Naive thymus-derived CD4-positive, alpha-beta T cell (primary cell): ENCODE measurements at regions of chr5 and their contacts with region 1.

Region 1: DNA sequence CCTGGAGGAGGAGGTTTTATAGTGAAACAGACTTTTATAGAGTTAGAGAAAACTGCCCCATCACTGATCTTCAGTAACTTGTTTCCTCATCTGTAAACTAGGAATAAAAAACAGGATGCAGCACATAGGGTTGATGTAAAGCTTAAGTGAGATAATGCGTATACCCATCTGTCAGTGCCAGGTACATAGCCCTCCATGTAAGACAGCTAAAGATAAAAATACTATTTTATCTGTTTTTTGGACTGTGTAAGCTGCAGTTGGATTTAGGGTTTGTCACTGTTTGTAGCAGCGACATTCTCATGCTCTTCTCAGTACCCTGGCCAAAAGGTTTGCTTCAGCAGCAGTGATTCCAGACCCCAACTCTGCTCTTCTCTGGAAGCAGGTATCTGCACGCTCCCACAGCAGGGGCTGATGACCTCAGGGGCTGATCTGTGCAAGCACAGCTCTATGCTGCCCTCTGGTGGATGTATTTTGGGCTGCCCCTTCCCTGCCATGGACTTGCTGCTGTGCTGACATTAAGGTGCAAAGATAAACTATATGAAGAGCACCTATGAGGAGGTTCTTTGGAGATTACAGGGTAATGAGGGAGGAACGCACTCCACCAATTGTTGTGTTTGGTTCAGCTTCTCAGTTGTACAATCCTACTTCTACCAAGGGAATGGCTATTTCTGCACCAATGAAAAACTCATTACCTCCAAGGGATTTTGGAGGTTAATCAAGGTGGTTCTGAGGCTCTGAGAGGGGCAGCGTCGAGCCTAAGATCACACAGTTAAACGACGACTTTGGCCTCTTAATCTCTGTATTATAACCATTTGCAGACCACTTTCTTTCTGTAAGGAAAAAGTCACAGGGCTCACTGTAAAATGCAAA is 13.1 kb downstream of the HMHB1 start:
- DNase-seq: peak; percentile 56 to 86 (median 75)
- ATAC-seq: peak; percentile 94
- H3K4me3 ChIP-seq: no peak overlapping the region
- H3K4me3 Mint-ChIP-seq: no peak overlapping the region
- H3K27ac ChIP-seq: no peak overlapping the region
- H3K27ac Mint-ChIP-seq: no peak overlapping the region
- H3K4me1 ChIP-seq: peaks cover 0 to 6% of the 10 kb centered on the region in 2 donors
- H3K4me1 Mint-ChIP-seq: peaks cover 0 to 18% (median 10%) of the 10 kb centered on the region in 7 donors
- H3K27me3 ChIP-seq: no peaks in the 10 kb centered on the region
- H3K27me3 Mint-ChIP-seq: peaks cover 0 to 5% (median 3%) of the 10 kb centered on the region in 5 donors

Region 2: GRCh38 chr5:142713121-142713706 is 1111.9 kb before region 1 on chr5:
- CTCF ChIA-PET with region 1: no interaction called
- POLR2A ChIA-PET with region 1: no interaction called
- intact Hi-C with region 1: loop called in 1 of 2 experiments (anchors 1 kb)
- DNase-seq: peak; percentile 72 to 92 (median 86)
- ATAC-seq: peak; percentile 96
- H3K4me3 ChIP-seq: peak overlapping the region; percentile 61
- H3K4me3 Mint-ChIP-seq: peak overlapping the region; percentile 45 to 82 (median 70)
- H3K27ac ChIP-seq: no peak overlapping the region
- H3K27ac Mint-ChIP-seq: peak overlapping the region in 2 of 9 donors; percentile 39 to 73
- H3K4me1 ChIP-seq: peaks cover 0 to 7% of the 10 kb centered on the region in 2 donors
- H3K4me1 Mint-ChIP-seq: peaks cover 0 to 16% (median 10%) of the 10 kb centered on the region in 7 donors
- H3K27me3 ChIP-seq: no peaks in the 10 kb centered on the region
- H3K27me3 Mint-ChIP-seq: peaks cover 0 to 33% (median 4%) of the 10 kb centered on the region in 5 donors

Region 3: DNA sequence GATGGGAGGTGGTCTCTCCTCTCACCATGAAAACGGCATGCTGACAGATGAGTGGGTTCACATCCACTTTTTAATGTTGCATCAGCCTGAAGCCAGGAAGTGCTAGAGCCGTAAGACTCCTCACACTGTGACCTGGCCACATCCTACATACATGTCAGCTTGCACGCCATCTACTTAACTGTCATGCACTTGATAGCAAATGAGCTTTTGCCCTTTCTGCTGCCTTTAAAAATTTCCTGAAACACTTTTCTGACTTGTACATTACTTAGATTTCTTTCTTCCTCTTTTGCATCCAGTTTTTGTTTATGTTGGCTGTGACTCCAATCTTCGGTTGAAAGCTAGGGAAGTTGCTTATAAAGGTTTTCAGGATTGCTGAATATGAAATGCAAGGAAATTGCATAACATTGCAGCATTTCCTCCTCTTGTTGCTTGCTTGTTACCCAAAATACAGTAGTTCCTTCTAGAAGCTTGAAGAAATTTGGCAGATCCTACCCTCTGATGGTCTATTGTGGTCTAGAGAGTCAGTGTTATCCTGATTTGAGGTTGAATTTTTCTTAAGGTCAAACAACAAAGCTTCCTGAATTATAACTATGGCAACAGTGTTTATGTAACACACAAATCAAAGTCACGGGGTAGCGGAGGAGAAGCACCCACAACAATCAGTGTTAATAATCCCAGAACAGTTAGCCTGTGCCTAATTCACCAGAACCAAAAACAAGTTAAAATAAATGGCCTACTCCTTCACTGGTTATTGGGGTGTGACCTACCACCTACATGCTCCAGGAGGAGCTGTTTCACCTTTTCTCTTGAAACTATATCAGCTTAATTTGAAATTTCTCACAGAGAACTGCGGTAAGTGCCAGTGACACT is 822.4 kb before region 1 on chr5:
- CTCF ChIA-PET with region 1: interaction called, 33 read pairs
- POLR2A ChIA-PET with region 1: interaction called, 4 read pairs
- intact Hi-C with region 1: loop called (anchors 1 kb)
- DNase-seq: peak in 8 of 9 donors; percentile 40 to 66 (median 50)
- ATAC-seq: peak; percentile 86
- H3K4me3 ChIP-seq: peak overlapping the region; percentile 3
- H3K4me3 Mint-ChIP-seq: peak overlapping the region; percentile 22 to 80 (median 62)
- H3K27ac ChIP-seq: peak overlapping the region; percentile 68
- H3K27ac Mint-ChIP-seq: peak overlapping the region; percentile 78 to 98 (median 90)
- H3K4me1 ChIP-seq: peaks cover 31 to 66% of the 10 kb centered on the region in 2 donors
- H3K4me1 Mint-ChIP-seq: peaks cover 37 to 90% (median 50%) of the 10 kb centered on the region in 7 donors
- H3K27me3 ChIP-seq: no peaks in the 10 kb centered on the region
- H3K27me3 Mint-ChIP-seq: no peaks in the 10 kb centered on the region

Region 4: DNA sequence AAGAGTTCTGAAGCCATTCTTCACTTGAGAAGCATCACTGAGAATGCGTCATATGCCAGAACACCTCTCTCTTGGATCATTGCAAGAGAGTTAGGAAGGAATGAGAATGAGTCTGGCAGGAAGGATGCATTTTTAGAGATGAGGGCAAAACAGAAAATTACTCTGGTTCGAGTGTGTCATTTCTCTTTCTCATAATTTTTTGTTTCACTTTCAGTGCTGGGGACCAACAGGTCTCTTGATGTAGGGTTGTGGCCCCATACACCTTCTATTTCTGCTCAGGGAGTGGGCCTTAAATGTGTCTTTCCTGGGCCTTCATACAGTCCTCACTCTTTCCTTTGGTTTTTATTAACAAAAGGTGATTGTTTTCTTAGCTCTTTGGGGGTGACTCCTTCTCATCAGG is 724.0 kb before region 1 on chr5:
- CTCF ChIA-PET with region 1: no interaction called
- POLR2A ChIA-PET with region 1: no interaction called
- intact Hi-C with region 1: loop called in 1 of 2 experiments (anchors 5 kb)
- DNase-seq: no peak
- ATAC-seq: no peak
- H3K4me3 ChIP-seq: no peak overlapping the region
- H3K4me3 Mint-ChIP-seq: peak overlapping the region in 1 of 10 donors; percentile 77
- H3K27ac ChIP-seq: no peak overlapping the region
- H3K27ac Mint-ChIP-seq: peak overlapping the region in 3 of 9 donors; percentile 3 to 91 (median 65)
- H3K4me1 ChIP-seq: peaks cover 0 to 6% of the 10 kb centered on the region in 2 donors
- H3K4me1 Mint-ChIP-seq: peaks cover 0 to 34% (median 9%) of the 10 kb centered on the region in 7 donors
- H3K27me3 ChIP-seq: no peaks in the 10 kb centered on the region
- H3K27me3 Mint-ChIP-seq: no peaks in the 10 kb centered on the region

Region 5: DNA sequence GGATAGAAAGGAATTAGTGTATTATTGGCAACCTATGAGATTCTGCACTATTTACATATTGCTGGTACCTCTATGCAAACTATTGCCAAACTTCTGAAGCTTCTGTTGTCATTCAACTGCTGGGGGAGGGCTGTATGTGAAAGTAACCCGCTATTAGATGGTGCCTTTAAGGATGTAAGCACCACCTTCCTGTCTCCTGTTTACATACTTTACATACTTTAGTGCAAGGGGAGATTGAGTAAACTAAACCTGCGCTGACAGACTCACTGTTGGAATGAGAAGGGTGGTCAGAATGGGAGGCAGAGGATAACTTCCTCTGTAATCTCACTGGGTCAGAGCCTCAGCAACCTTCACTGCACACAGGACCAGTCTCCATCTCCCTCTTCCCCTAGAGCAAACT is 545.4 kb before region 1 on chr5:
- CTCF ChIA-PET with region 1: no interaction called
- POLR2A ChIA-PET with region 1: no interaction called
- intact Hi-C with region 1: loop called in 1 of 2 experiments (anchors 10 kb)
- DNase-seq: no peak
- ATAC-seq: no peak
- H3K4me3 ChIP-seq: no peak overlapping the region
- H3K4me3 Mint-ChIP-seq: no peak overlapping the region
- H3K27ac ChIP-seq: no peak overlapping the region
- H3K27ac Mint-ChIP-seq: peak overlapping the region in 1 of 9 donors; percentile 10
- H3K4me1 ChIP-seq: no peaks in the 10 kb centered on the region
- H3K4me1 Mint-ChIP-seq: peaks cover 0 to 10% (median 4%) of the 10 kb centered on the region in 7 donors
- H3K27me3 ChIP-seq: no peaks in the 10 kb centered on the region
- H3K27me3 Mint-ChIP-seq: no peaks in the 10 kb centered on the region

Region 6: GRCh38 chr5:144183254-144183889 is 358.3 kb after region 1 on chr5:
- CTCF ChIA-PET with region 1: no interaction called
- POLR2A ChIA-PET with region 1: no interaction called
- intact Hi-C with region 1: loop called in 1 of 2 experiments (anchors 1 kb)
- DNase-seq: peak in 6 of 9 donors; percentile 17 to 42 (median 34)
- ATAC-seq: no peak
- H3K4me3 ChIP-seq: no peak overlapping the region
- H3K4me3 Mint-ChIP-seq: no peak overlapping the region
- H3K27ac ChIP-seq: no peak overlapping the region
- H3K27ac Mint-ChIP-seq: peak overlapping the region in 5 of 9 donors; percentile 15 to 71 (median 49)
- H3K4me1 ChIP-seq: peaks cover 19 to 41% of the 10 kb centered on the region in 2 donors
- H3K4me1 Mint-ChIP-seq: peaks cover 19 to 56% (median 43%) of the 10 kb centered on the region in 7 donors
- H3K27me3 ChIP-seq: no peaks in the 10 kb centered on the region
- H3K27me3 Mint-ChIP-seq: peaks cover 0 to 2% (median 0%) of the 10 kb centered on the region in 5 donors

Region 7: DNA sequence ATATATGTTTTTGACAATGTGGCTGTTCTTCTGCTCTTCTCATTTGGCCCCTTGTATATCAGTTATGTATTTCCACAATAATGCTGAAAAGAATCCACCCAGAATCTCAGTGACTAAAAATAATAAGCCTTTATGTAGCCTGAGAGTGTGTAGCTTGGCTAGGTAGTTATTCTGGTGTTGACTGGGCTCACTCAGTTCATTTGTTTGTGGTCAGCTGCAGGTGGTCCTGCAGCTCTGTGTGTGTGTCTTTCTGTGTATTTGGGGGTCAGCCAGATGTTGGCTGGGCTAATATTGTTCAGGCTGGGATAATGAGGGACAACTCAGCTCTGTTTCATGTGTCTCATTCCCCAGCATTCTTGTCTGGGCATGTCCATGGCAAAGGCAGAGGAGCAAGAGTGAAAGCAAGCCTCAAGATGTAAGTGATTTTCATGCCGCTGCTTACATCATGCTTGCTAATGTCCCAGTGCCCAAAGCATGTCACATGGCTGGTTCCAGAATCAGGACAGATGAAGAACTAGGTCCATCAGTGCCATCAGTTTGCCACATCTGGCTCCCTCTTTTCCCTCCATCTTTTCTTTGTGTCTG is 508.3 kb after region 1 on chr5:
- CTCF ChIA-PET with region 1: no interaction called
- POLR2A ChIA-PET with region 1: no interaction called
- intact Hi-C with region 1: no loop called
- DNase-seq: no peak
- ATAC-seq: no peak
- H3K4me3 ChIP-seq: no peak overlapping the region
- H3K4me3 Mint-ChIP-seq: no peak overlapping the region
- H3K27ac ChIP-seq: no peak overlapping the region
- H3K27ac Mint-ChIP-seq: no peak overlapping the region
- H3K4me1 ChIP-seq: no peaks in the 10 kb centered on the region
- H3K4me1 Mint-ChIP-seq: no peaks in the 10 kb centered on the region
- H3K27me3 ChIP-seq: no peaks in the 10 kb centered on the region
- H3K27me3 Mint-ChIP-seq: peaks cover 0 to 15% (median 2%) of the 10 kb centered on the region in 5 donors